ENCODE measurements at regions of chr5 and their contacts with region 1.

Region 1: GRCh38 chr5:16842896-16843295 is 93.2 kb downstream of the MYO10 start:
- DNase-seq: no peak
- H3K4me3 ChIP-seq: no peak overlapping the region
- H3K27ac ChIP-seq: no peak overlapping the region
- H3K4me1 ChIP-seq: no peaks in the 10 kb centered on the region
- H3K27me3 ChIP-seq: no peaks in the 10 kb centered on the region
- CTCF ChIP-seq: no peak
- EP300 ChIP-seq: no peak
- POLR2A ChIP-seq: no peak
- RAD21 ChIP-seq: no peak

Region 2: GRCh38 chr5:16855485-16855884 is 12.6 kb after region 1 on chr5:
- CTCF ChIA-PET with region 1: interaction called, 12 read pairs
- POLR2A ChIA-PET with region 1: interaction called, 4 read pairs
- DNase-seq: no peak
- H3K4me3 ChIP-seq: no peak overlapping the region
- H3K27ac ChIP-seq: no peak overlapping the region
- H3K4me1 ChIP-seq: peaks cover 0 to 14% (median 5%) of the 10 kb centered on the region in 4 experiments; a peak in 4 of 7 replicates
- H3K27me3 ChIP-seq: no peaks in the 10 kb centered on the region
- CTCF ChIP-seq: no peak
- EP300 ChIP-seq: no peak
- POLR2A ChIP-seq: no peak
- RAD21 ChIP-seq: no peak